ENCODE measurements at regions of chr3 and their contacts with region 1.

Region 1: GRCh38 chr3:131047582-131047981 is 20.9 kb downstream of the NEK11 start:
- DNase-seq: no peak
- CTCF ChIP-seq: no peak

Region 2: GRCh38 chr3:130935761-130936492 is 111.7 kb before region 1 on chr3:
- CTCF ChIA-PET with region 1: no interaction called
- POLR2A ChIA-PET with region 1: no interaction called
- DNase-seq: no peak
- CTCF ChIP-seq: no peak

Region 3: DNA sequence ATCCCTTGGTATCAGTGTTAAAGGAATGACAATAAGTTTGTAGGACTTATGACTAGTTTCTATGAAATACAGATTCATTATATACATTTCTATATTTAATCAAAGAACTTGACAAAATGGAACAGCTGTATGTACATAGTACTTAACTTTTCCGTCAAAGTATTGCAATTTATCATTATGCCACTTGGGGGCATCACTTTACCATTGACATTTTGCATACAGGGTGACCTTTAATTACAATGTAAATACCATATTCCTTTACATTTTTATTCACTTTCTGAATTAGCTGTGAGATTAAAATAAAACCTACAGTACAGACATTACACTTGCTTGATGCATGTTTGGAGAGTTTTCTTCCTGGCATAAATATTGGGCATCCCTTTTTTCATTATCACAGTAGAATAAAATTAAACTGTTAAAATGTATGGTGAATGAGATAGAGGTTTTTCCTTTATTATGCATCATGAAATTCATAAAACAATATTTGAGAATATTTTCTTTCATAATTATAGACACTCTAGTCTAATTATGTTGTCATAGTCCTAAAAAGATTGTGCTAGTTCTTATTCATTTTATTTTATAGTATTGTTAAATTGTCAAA is 14.0 kb before region 1 on chr3:
- CTCF ChIA-PET with region 1: interaction called, 15 read pairs
- POLR2A ChIA-PET with region 1: no interaction called
- DNase-seq: peak; percentile 50
- CTCF ChIP-seq: peak; percentile 64